ENCODE measurements at regions of chr11 and their contacts with region 1.

Region 1: GRCh38 chr11:4493480-4493818 is 11.0 kb downstream of the OR52K1 start:
- DNase-seq: no peak
- ATAC-seq: no peak
- H3K4me3 ChIP-seq: no peak overlapping the region
- H3K27ac ChIP-seq: no peak overlapping the region
- H3K4me1 ChIP-seq: peaks cover 0 to 8% of the 10 kb centered on the region in 2 donors
- H3K27me3 ChIP-seq: peaks cover 0 to 10% of the 10 kb centered on the region in 2 donors
- CTCF ChIP-seq: peak in 1 of 2 donors; percentile 25

Region 2: GRCh38 chr11:4072668-4073285 is 420.7 kb before region 1 on chr11:
- intact Hi-C with region 1: no loop called
- DNase-seq: peak in 2 of 4 donors; percentile 81 to 88
- ATAC-seq: peak; percentile 95
- H3K4me3 ChIP-seq: no peak overlapping the region
- H3K27ac ChIP-seq: no peak overlapping the region
- H3K4me1 ChIP-seq: peaks cover 0 to 21% of the 10 kb centered on the region in 2 donors
- H3K27me3 ChIP-seq: no peaks in the 10 kb centered on the region
- CTCF ChIP-seq: peak; percentile 75 to 90

Region 3: DNA sequence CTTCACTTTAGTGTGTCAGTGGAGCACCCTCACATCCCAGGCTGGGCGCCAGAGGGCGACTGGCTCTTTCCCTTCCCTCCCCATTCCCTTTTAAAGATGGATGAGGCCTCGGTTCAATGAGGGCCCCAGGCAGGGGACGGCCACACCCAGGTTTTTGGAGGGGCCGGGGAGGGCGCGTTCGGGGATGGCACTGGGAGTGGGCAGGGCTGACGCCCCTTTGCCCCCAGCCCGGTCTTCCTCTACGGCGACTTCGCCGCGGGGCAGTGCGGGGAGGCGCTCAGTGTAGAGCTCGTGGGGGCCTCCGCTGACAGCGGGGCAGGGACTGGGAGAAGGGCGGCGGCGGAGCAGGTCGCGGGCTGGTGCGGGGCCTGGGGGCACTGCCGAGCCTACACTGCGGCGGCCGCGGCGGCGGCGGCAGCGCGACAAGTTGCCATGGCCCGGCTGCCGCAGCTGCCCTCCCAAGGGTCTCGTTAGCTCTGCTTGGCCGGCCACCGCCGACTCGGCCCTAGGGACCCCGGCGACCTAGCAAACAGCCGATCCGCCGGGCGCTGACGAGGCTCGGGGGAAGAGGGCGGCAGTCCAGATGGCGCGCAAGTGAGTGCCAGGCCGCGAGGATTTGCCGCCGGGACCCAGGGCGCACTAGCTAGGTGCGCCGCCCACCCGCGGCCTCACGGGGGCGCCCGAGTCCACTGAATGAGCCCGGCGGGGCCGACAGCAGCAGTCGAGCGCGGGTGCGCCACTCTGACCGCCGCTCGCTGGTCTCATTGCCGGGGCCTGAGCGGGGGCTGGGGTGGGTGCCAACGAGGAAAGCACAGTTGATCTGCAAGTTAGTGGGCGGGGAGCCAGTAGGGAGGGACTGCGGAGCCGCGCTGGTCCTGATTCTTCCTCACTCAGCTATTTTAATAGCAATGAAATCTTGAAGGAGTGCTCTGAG is 306.1 kb before region 1 on chr11:
- intact Hi-C with region 1: loop called in 1 of 2 experiments (anchors 5 kb)
- DNase-seq: peak; percentile 91 to 99 (median 95)
- ATAC-seq: peak; percentile 99
- H3K4me3 ChIP-seq: peak overlapping the region; percentile 53 to 56
- H3K27ac ChIP-seq: no peak overlapping the region
- H3K4me1 ChIP-seq: peaks cover 0 to 8% of the 10 kb centered on the region in 2 donors
- H3K27me3 ChIP-seq: no peaks in the 10 kb centered on the region
- CTCF ChIP-seq: peak; percentile 93 to 99

Region 4: GRCh38 chr11:4932751-4933150 is 439.3 kb after region 1 on chr11:
- intact Hi-C with region 1: no loop called
- DNase-seq: no peak
- ATAC-seq: no peak
- H3K4me3 ChIP-seq: no peak overlapping the region
- H3K27ac ChIP-seq: no peak overlapping the region
- H3K4me1 ChIP-seq: no peaks in the 10 kb centered on the region
- H3K27me3 ChIP-seq: no peaks in the 10 kb centered on the region
- CTCF ChIP-seq: no peak